ENCODE measurements at regions of chr13 and their contacts with region 1.

Region 1: GRCh38 chr13:50081679-50082425 is 66.6 kb downstream of the KCNRG start:
- H3K4me3 Mint-ChIP-seq: peak overlapping the region; percentile 98
- H3K27ac Mint-ChIP-seq: peak overlapping the region; percentile 91
- H3K4me1 Mint-ChIP-seq: peaks cover 52% of the 10 kb centered on the region
- H3K27me3 Mint-ChIP-seq: no peaks in the 10 kb centered on the region

Region 2: DNA sequence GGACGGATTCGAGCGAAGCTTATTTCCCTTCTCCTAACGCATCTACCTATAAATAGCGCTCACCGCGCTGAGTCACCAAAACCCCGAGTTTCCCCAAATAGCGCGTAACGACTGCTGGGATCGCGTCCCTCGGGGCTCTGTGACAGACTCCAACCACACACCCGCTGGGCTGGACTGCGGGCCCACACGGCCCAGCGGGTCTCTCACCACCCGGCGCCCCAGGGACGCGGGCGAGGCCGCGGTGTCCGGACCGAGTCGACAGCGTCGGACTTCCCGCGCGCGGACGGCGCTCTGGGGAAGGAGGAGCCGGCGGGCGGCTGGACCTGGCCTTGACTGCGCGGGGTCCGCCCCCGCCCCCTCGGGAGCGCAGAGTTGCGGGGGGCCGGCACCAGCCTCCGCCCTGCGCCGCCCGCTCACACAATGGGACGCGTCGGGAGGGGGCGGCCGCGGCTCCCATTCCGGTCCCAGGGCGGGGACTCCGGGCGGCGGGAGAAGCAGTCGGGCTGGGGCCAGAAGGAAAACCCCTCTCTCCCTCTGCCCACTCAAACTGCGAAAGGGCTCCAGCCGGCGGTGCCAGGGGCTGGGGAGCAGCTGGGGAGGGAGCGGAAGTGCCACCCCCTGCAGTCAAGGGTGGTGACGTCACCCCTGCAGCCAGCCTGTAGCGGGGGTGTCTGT is 42.1 kb after region 1 on chr13:
- intact Hi-C with region 1: loop called (anchors 2 kb)
- H3K4me3 Mint-ChIP-seq: peak overlapping the region; percentile 90
- H3K27ac Mint-ChIP-seq: peak overlapping the region; percentile 85
- H3K4me1 Mint-ChIP-seq: peaks cover 66% of the 10 kb centered on the region
- H3K27me3 Mint-ChIP-seq: peaks cover 11% of the 10 kb centered on the region

Measured in dendritic cell treated with granulocyte-macrophage colony-stimulating factor and Interleukin-4, amounts not matched to agents 40 ng/mL and 50 ng/mL, for 4 days (primary cell).